CD4-positive, alpha-beta memory T cell (primary cell): ENCODE measurements at regions of chr6 and their contacts with region 1.

Region 1: DNA sequence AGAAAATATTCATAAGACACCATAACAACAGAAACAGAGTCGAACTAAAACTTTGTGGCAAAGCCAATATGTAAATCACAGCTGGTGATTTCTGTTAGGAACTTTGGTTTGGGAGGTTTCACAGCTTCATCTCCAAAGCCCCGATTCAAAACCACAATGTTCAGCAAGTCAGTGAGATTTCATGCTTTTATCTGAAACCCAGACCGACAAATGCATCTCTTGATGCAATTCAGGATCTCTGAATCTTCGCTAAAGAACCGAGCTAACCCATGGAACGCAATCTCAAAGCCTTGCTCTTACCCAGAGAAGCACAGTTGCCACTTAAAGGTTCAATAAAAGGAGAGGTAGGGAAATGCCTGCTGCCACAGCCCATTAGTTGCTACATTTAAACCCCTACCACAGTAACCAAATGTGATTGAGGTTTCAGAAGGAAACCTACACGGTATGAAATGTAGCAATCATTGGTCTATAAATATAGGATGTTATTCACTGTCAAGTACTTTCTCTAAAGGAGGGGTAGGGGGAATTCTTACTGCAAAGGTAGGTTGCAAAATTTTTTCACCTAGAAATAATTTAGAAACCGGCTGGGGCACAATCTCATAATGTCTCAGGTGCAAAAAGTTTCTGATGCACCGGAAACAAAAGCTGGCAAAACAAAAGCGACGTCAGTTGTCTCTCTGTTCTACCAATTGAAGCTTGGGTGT is 381.0 kb upstream of the ARID1B start:
- DNase-seq: peak; percentile 69 to 80 (median 73)
- H3K4me3 ChIP-seq: peak overlapping the region; percentile 9 to 53
- H3K4me3 Mint-ChIP-seq: peak overlapping the region; percentile 78 to 89 (median 86)
- H3K27ac ChIP-seq: peak overlapping the region; percentile 56
- H3K27ac Mint-ChIP-seq: peak overlapping the region; percentile 90 to 100 (median 98)
- H3K4me1 ChIP-seq: peaks cover 84% of the 10 kb centered on the region
- H3K4me1 Mint-ChIP-seq: peaks cover 51 to 89% (median 75%) of the 10 kb centered on the region in 4 donors
- H3K27me3 ChIP-seq: no peaks in the 10 kb centered on the region
- H3K27me3 Mint-ChIP-seq: no peaks in the 10 kb centered on the region

Region 2: DNA sequence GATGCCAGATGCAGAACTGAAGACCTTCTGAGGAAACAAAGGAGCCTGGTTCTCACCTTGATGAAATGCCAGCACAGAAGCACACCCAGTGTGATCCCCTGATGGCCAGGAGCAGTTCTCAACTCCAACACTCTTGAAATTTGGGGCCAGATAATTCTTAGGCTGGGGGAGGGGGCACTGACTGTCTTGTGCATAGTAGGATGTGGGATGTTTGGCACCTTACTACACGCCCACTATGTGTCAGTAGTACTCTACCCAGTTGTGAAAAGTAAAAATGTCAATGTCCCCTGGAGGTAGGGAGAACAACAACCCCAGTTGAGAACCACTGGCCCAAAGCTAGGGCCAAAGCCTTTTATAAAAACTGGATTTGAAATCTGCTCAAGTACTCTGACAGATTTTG is 17.4 kb before region 1 on chr6:
- CTCF ChIA-PET with region 1: interaction called, 5 read pairs
- POLR2A ChIA-PET with region 1: interaction called, 10 read pairs
- intact Hi-C with region 1: loop called (anchors 1 kb)
- DNase-seq: peak in 4 of 5 donors; percentile 18 to 41 (median 26)
- H3K4me3 ChIP-seq: no peak overlapping the region
- H3K4me3 Mint-ChIP-seq: no peak overlapping the region
- H3K27ac ChIP-seq: no peak overlapping the region
- H3K27ac Mint-ChIP-seq: peak overlapping the region in 4 of 7 donors; percentile 39 to 65 (median 45)
- H3K4me1 ChIP-seq: no peaks in the 10 kb centered on the region
- H3K4me1 Mint-ChIP-seq: peaks cover 0 to 13% (median 2%) of the 10 kb centered on the region in 4 donors
- H3K27me3 ChIP-seq: no peaks in the 10 kb centered on the region
- H3K27me3 Mint-ChIP-seq: peaks cover 0 to 3% of the 10 kb centered on the region in 2 donors

Region 3: DNA sequence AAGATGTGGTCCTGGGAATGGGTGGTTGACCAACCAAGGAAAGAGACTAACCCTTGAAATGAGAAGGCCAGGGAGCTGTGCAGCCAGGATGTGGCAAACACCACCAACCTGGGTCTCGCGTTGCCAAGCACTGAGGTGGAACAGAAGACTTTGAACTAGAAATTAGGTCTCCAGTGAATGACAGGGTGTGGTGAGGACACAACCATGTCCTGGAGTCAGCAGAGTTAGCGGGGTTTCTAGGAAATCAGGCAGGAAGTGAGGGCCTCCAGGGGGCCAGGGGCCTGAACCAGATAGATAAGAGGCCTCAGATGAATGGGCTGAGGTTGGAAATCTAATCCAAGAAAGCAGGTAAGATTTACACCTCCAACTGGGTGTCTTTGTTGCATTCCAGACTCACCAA is 27.6 kb after region 1 on chr6:
- CTCF ChIA-PET with region 1: interaction called, 6 read pairs
- POLR2A ChIA-PET with region 1: interaction called, 20 read pairs
- intact Hi-C with region 1: no loop called
- DNase-seq: peak; percentile 41 to 58 (median 45)
- H3K4me3 ChIP-seq: no peak overlapping the region
- H3K4me3 Mint-ChIP-seq: peak overlapping the region in 7 of 8 donors; percentile 56 to 87 (median 70)
- H3K27ac ChIP-seq: peak overlapping the region; percentile 12
- H3K27ac Mint-ChIP-seq: peak overlapping the region; percentile 54 to 92 (median 84)
- H3K4me1 ChIP-seq: peaks cover 28% of the 10 kb centered on the region
- H3K4me1 Mint-ChIP-seq: peaks cover 26 to 44% (median 36%) of the 10 kb centered on the region in 4 donors
- H3K27me3 ChIP-seq: no peaks in the 10 kb centered on the region
- H3K27me3 Mint-ChIP-seq: no peaks in the 10 kb centered on the region

Region 4: DNA sequence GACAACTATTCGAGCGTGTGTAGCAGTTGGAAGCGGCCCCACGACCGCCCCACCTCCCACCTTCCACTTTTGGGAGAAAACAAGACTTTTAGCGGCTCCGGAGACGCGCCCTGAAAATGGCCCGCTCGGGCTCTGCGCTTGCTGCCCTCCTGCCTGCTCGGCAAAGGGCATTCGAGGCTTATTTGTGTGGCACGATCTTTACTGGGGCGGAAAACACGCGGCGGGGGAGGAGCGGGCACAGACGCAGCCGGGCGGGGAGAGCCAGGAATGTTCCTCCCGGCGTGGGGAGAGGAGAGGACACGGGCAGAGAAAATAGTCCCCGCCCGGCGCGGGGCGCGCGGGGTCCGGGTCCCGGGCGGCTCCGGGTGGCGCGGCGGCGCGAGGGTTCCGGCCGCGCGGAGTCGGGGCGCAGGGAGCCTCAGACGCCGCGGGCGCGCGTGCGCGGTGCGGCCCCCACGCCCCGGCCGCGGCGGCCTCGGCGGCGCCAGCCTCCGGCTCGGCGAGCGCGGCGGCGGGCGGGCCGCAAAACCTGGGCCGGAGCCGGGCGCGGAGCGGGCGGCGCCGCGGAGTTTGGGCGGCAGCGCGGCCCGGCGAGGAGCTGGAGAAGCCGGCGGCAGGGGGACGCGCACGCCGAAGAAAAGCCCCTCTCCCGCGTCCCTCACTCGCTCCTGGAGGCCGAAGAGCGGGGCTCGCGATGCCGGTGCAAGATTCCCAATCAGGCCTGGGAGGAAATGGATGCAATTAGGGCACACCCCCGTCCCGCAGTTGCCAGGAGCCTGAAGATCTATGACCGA is 291.0 kb after region 1 on chr6:
- CTCF ChIA-PET with region 1: no interaction called
- POLR2A ChIA-PET with region 1: interaction called, 12 read pairs
- intact Hi-C with region 1: loop called (anchors 1 kb)
- DNase-seq: peak; percentile 80 to 90 (median 85)
- H3K4me3 ChIP-seq: peak overlapping the region; percentile 68 to 92
- H3K4me3 Mint-ChIP-seq: peak overlapping the region; percentile 88 to 95 (median 92)
- H3K27ac ChIP-seq: peak overlapping the region; percentile 95
- H3K27ac Mint-ChIP-seq: peak overlapping the region; percentile 88 to 98 (median 97)
- H3K4me1 ChIP-seq: peaks cover 14% of the 10 kb centered on the region
- H3K4me1 Mint-ChIP-seq: peaks cover 10 to 24% (median 15%) of the 10 kb centered on the region in 4 donors
- H3K27me3 ChIP-seq: peaks cover 4% of the 10 kb centered on the region
- H3K27me3 Mint-ChIP-seq: no peaks in the 10 kb centered on the region

Region 5: DNA sequence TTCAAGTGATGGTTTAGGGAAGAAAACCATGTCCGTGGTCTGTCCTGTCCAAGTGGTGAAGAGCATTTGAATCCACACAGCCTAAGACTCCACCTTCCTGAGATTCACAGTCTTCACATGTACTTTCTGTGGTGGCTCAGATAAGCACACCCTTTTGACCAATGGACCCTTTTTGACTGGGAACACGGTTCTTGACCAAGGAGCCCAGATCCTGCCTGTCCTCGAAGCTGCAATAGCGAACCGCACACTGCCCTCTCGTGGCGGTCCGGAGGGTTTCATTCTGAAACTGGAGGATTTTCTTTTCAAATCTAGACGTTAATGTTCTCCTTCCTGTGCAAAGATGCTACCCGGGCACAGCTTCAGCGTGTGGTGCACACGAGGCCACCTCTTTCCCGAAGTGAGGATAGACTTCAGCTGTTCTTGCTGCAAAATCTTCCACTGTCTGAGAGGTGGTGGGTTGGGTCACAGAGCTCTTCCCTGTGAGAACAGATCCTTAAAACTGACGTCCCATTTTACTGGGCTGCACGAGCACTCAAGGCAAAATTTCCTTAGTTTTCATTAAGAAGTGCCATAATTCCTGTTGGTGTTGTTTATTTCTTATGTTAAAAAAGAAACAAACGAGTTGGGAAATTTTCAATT is 1676.0 kb after region 1 on chr6:
- CTCF ChIA-PET with region 1: no interaction called
- POLR2A ChIA-PET with region 1: no interaction called
- intact Hi-C with region 1: no loop called
- DNase-seq: peak; percentile 56 to 59 (median 57)
- H3K4me3 ChIP-seq: no peak overlapping the region
- H3K4me3 Mint-ChIP-seq: no peak overlapping the region
- H3K27ac ChIP-seq: no peak overlapping the region
- H3K27ac Mint-ChIP-seq: peak overlapping the region in 5 of 7 donors; percentile 10 to 93 (median 87)
- H3K4me1 ChIP-seq: peaks cover 9% of the 10 kb centered on the region
- H3K4me1 Mint-ChIP-seq: peaks cover 9 to 25% (median 16%) of the 10 kb centered on the region in 4 donors
- H3K27me3 ChIP-seq: no peaks in the 10 kb centered on the region
- H3K27me3 Mint-ChIP-seq: no peaks in the 10 kb centered on the region